Panc1 (cell line): ENCODE measurements at regions of chr3 and their contacts with region 1.

Region 1: GRCh38 chr3:191051037-191051436 is 148.0 kb upstream of the OSTN start:
- DNase-seq: no peak
- ATAC-seq: peak; percentile 81
- H3K4me3 ChIP-seq: no peak overlapping the region
- H3K27ac ChIP-seq: no peak overlapping the region
- H3K4me1 ChIP-seq: no peaks in the 10 kb centered on the region
- H3K27me3 ChIP-seq: no peaks in the 10 kb centered on the region
- CTCF ChIP-seq: peak; percentile 68

Region 2: DNA sequence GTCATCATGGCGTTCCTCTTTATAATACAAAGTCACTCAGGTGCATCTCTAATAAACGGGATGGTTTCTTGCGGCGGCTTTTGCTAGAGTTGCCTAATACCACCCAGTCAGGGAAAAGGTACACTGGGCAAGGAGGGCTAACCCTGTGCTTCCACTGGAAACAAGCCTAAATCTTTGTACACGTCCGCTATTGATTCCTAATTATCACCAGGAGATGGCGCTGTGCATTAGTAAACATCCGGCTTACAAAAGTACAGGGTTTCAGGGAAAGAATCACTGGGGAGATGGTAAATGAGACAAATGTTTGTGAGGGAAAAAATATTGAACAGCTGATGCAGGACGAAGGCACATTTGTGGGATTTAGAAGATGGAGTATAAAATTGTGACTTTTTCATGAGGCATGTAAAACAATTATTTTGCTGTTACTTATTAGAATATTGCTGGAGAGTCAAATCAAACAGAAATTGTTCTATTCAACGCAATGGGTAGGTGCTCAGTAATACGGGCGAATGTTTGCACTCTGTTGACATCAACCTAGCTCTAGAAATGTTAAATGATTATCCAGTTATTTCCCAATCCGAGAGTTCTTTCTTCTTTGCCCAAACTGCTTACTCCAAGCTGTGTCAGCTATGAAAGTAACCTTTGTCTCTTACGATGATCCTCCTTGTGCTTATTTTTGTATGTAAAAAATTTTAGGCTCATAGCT is 239.1 kb before region 1 on chr3:
- CTCF ChIA-PET with region 1: interaction called, 3 read pairs
- POLR2A ChIA-PET with region 1: interaction called, 3 read pairs
- in situ Hi-C with region 1: no loop called
- intact Hi-C with region 1: loop called (anchors 1 kb)
- DNase-seq: peak; percentile 56
- ATAC-seq: peak; percentile 89
- H3K4me3 ChIP-seq: peak overlapping the region; percentile 23 to 36
- H3K27ac ChIP-seq: no peak overlapping the region
- H3K4me1 ChIP-seq: peaks cover 4% of the 10 kb centered on the region; the same call in 1 of the 2 replicates
- H3K27me3 ChIP-seq: no peaks in the 10 kb centered on the region
- CTCF ChIP-seq: peak; percentile 86

Region 3: DNA sequence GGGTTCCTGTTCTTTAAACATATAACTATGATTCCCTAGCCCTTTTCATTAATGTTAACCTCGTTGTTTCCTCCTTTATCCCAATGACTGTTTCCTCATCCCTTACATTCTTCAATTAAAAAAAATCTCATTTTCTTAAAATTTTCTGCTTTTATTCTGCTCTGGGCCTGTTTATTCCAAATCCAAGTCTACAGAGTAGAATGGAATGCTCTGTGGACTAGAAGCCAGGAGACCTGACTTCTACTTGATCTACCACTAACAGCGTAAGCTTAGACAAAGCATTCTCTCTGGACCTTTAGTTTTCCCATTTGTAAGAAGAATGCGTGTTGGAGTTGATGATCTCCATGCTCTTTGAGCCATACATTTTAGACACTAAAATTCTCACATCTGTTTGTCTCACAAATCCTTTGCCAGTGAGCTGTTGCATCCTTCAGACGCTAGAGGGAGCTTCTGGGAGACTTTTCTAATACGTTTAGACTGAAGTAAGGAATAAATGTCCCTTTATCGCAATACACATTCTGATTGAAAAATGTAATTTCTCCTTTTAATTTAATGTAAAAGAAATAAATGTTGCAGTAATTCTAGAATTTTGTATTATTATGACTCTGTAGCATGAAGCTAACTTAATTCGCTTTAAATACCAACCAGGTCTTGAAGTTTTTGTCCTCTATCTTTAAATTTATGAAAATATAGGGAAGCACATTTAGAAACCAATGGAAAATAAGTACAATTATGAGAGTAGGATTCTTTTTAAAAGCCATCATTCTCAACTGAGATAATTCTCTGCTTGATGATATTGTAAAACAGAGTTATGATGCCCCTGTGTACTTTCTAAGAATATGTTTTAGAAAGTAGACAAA is 166.8 kb before region 1 on chr3:
- CTCF ChIA-PET with region 1: interaction called, 13 read pairs
- POLR2A ChIA-PET with region 1: no interaction called
- in situ Hi-C with region 1: no loop called
- intact Hi-C with region 1: loop called (anchors 1 kb)
- DNase-seq: peak; percentile 56
- ATAC-seq: peak; percentile 88
- H3K4me3 ChIP-seq: no peak overlapping the region
- H3K27ac ChIP-seq: no peak overlapping the region
- H3K4me1 ChIP-seq: no peaks in the 10 kb centered on the region
- H3K27me3 ChIP-seq: no peaks in the 10 kb centered on the region
- CTCF ChIP-seq: peak; percentile 92